MCF 10A (cell line): ENCODE measurements at regions of chr14 and their contacts with region 1.

Region 1: GRCh38 chr14:74976264-74977125 is 21.1 kb upstream of the PGF start:
- DNase-seq: no peak
- H3K4me3 Mint-ChIP-seq: no peak overlapping the region
- H3K27ac Mint-ChIP-seq: no peak overlapping the region
- H3K4me1 Mint-ChIP-seq: peaks cover 6% of the 10 kb centered on the region
- H3K27me3 Mint-ChIP-seq: no peaks in the 10 kb centered on the region
- CTCF ChIP-seq: no peak

Region 2: GRCh38 chr14:74988131-74988530 is 11.6 kb after region 1 on chr14:
- CTCF ChIA-PET with region 1: interaction called, 11 read pairs
- POLR2A ChIA-PET with region 1: interaction called, 3 read pairs
- intact Hi-C with region 1: no loop called
- DNase-seq: peak; percentile 70
- H3K4me3 Mint-ChIP-seq: no peak overlapping the region
- H3K27ac Mint-ChIP-seq: peak overlapping the region; percentile 1
- H3K4me1 Mint-ChIP-seq: peaks cover 9% of the 10 kb centered on the region
- H3K27me3 Mint-ChIP-seq: no peaks in the 10 kb centered on the region
- CTCF ChIP-seq: no peak

Region 3: DNA sequence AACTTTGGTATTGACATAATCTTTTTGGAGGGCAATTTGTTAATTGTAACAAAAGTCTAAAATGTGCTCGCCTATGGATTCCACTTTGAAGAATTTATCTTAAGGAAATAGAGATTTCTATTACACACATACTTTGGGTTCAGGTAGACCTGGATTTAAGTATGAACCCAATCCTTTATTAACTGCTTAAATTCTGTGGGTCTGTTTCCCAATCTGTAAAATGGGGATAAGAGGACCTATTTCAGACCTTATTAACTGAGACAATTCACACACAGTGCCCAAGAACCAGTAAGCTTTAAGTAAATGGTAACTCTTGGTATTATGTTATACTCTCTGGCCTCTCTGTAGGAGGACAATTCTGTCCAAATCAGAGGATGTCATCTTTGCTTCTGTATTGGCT is 25.4 kb after region 1 on chr14:
- CTCF ChIA-PET with region 1: no interaction called
- POLR2A ChIA-PET with region 1: no interaction called
- intact Hi-C with region 1: no loop called
- DNase-seq: no peak
- H3K4me3 Mint-ChIP-seq: peak overlapping the region; percentile 94
- H3K27ac Mint-ChIP-seq: peak overlapping the region; percentile 72
- H3K4me1 Mint-ChIP-seq: peaks cover 16% of the 10 kb centered on the region
- H3K27me3 Mint-ChIP-seq: no peaks in the 10 kb centered on the region
- CTCF ChIP-seq: no peak